ENCODE measurements at regions of chr7 and their contacts with region 1.

Region 1: DNA sequence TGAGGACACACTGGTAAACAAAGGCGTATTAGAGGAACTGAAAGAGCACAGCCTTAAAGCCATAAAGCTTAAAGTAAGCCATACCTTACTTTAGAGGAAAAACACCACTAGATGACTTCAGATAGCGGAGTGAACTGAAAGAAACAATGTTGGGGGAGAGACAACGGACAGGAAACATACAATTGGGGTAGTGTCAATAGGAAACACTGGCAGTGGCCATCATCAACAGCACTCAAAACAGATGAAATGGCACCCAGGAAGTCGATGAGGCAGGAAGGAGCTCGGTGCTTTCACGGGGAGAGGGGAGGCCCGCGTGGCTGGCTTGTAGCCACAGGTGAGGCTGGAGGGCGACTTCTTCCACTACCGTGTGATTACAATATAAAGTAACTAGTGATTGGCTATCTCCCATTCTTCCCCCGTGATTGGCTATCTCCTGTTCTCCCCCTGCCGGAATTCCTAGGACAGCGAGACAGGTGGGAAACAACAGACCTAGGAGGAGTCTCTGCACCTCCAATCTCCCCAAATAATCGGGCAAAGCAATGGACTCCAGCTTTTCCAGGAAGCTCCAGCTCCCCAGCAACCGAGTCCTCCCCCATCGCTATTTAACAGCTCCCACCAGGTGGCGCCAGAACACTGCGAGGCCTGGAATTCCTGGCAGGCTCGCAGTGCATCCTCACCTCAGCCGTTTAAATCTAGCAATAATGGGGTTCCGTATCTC is 2.4 kb upstream of the TAS2R38 start:
- DNase-seq: no peak
- H3K4me3 ChIP-seq: peak overlapping the region in 1 of 4 donors; percentile 45
- H3K27ac ChIP-seq: no peak overlapping the region
- H3K4me1 ChIP-seq: no peaks in the 10 kb centered on the region
- H3K27me3 ChIP-seq: no peaks in the 10 kb centered on the region
- CTCF ChIP-seq: peak; percentile 26 to 77 (median 60)
- POLR2A ChIP-seq: no peak

Region 2: GRCh38 chr7:142188846-142189245 is 212.9 kb after region 1 on chr7:
- intact Hi-C with region 1: loop called (anchors 10 kb)
- DNase-seq: no peak
- H3K4me3 ChIP-seq: no peak overlapping the region
- H3K27ac ChIP-seq: no peak overlapping the region
- H3K4me1 ChIP-seq: no peaks in the 10 kb centered on the region
- H3K27me3 ChIP-seq: no peaks in the 10 kb centered on the region
- CTCF ChIP-seq: peak in 2 of 6 experiments; percentile 9 to 22
- POLR2A ChIP-seq: no peak

Measured in esophagus squamous epithelium (tissue), 5 donors.